ENCODE measurements at regions of chr3 and their contacts with region 1.

Region 1: DNA sequence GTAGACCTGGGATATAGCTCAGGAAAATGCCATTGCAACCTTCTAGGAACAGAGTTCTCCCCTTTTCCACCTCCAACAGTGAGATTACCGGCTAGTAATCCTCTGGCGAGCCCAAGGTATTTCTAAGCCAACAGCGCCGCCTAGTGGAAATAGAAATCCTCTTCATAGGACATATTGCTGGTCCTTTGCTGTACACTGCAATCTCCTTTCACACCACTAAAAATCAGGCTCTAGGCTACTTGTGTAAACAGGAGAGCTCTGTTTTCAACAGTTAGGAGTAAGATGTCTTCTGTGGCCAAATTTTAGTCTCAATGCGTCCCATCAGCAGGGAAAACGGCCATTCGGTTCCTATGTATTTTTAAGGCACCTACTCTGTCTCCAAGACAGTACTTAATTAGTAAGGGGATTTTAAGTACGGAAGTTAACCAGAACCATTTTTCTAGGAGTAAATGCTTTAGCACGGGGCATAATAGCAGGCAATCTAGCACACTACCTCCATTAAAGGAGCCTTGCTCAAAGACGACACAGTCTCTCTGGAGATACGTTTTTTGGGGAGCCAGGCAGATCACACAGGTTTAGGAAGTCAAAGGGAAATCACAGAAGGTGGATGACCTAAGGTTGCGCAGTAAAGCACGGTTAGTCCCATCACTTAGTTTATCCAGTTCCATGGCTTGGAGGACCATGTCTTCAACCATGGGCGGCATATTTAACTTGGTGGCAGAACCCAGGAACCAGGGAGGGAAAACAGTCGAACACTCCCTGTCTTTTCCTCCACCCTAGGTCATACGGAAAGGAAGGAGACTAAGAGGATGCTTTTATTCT is 43.8 kb downstream of the NCEH1 start:
- DNase-seq: peak; percentile 61 to 81
- ATAC-seq: peak; percentile 100
- H3K4me3 ChIP-seq: no peak overlapping the region
- H3K27ac ChIP-seq: peak overlapping the region; percentile 23 to 73; a peak in 4 of 6 replicates
- H3K4me1 ChIP-seq: peaks cover 5% of the 10 kb centered on the region; the same call in 2 of the 3 replicates
- CTCF ChIP-seq: peak; percentile 82
- EP300 ChIP-seq: no peak
- POLR2A ChIP-seq: no peak
- RAD21 ChIP-seq: peak; percentile 88 to 93

Region 2: GRCh38 chr3:170899455-170899854 is 1767.6 kb before region 1 on chr3:
- CTCF ChIA-PET with region 1: no interaction called
- POLR2A ChIA-PET with region 1: interaction called, 11 read pairs
- DNase-seq: no peak
- ATAC-seq: no peak
- H3K4me3 ChIP-seq: no peak overlapping the region
- H3K27ac ChIP-seq: no peak overlapping the region
- H3K4me1 ChIP-seq: no peaks in the 10 kb centered on the region
- CTCF ChIP-seq: no peak
- EP300 ChIP-seq: no peak
- POLR2A ChIP-seq: no peak
- RAD21 ChIP-seq: no peak

Region 3: GRCh38 chr3:172595641-172596393 is 71.3 kb before region 1 on chr3:
- CTCF ChIA-PET with region 1: interaction called, 27 read pairs
- POLR2A ChIA-PET with region 1: no interaction called
- DNase-seq: peak; percentile 45 to 46
- ATAC-seq: peak; percentile 80 to 91
- H3K4me3 ChIP-seq: peak overlapping the region; percentile 19; the same call in 1 of the 3 replicates
- H3K27ac ChIP-seq: peak overlapping the region; percentile 29 to 33; a peak in 2 of 6 replicates
- H3K4me1 ChIP-seq: peaks cover 7% of the 10 kb centered on the region; the same call in 1 of the 3 replicates
- CTCF ChIP-seq: peak; percentile 80
- EP300 ChIP-seq: no peak
- POLR2A ChIP-seq: no peak
- RAD21 ChIP-seq: peak; percentile 80 to 82

Region 4: GRCh38 chr3:172622916-172623700 is 44.0 kb before region 1 on chr3:
- CTCF ChIA-PET with region 1: interaction called, 30 read pairs
- POLR2A ChIA-PET with region 1: interaction called, 9 read pairs
- DNase-seq: peak in 1 of 2 experiments; percentile 44
- ATAC-seq: peak; percentile 56 to 76; a peak in 3 of 6 replicates
- H3K4me3 ChIP-seq: peak overlapping the region; percentile 63
- H3K27ac ChIP-seq: peak overlapping the region; percentile 89 to 97
- H3K4me1 ChIP-seq: peaks cover 40% of the 10 kb centered on the region
- CTCF ChIP-seq: peak; percentile 70
- EP300 ChIP-seq: no peak
- POLR2A ChIP-seq: no peak
- RAD21 ChIP-seq: peak in 1 of 2 experiments; percentile 34; a peak in 1 of 5 replicates

Region 5: GRCh38 chr3:172685346-172686214 is 18.5 kb after region 1 on chr3:
- CTCF ChIA-PET with region 1: interaction called, 23 read pairs
- POLR2A ChIA-PET with region 1: no interaction called
- DNase-seq: no peak
- ATAC-seq: 0 out of 6 replicates have a peak, but pooled peaks of 1 of the 2 experiments have one; percentile 21
- H3K4me3 ChIP-seq: no peak overlapping the region
- H3K27ac ChIP-seq: peak overlapping the region in 1 of 2 experiments; percentile 58; a peak in 3 of 6 replicates
- H3K4me1 ChIP-seq: peaks cover 22% of the 10 kb centered on the region
- CTCF ChIP-seq: no peak
- EP300 ChIP-seq: no peak
- POLR2A ChIP-seq: no peak
- RAD21 ChIP-seq: no peak

Region 6: DNA sequence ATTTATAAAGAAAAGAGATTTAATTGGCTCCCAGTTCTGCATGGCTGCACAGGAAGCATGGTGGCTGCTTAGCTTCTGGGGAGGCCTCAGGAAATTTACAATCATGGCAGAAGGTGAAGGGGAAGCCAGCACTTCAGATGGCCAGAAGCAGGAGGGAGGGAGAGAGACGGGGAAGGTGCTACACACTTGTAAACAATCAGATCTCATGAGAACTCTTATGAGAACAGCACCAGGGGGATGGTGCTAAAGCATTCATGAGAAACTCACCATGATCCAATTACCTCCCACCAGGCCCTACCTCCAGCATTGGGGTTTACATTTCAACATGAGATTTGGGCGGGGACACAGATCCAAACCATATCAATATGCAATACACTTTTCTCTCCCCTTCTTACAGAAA is 157.1 kb after region 1 on chr3:
- CTCF ChIA-PET with region 1: no interaction called
- POLR2A ChIA-PET with region 1: no interaction called
- DNase-seq: no peak
- ATAC-seq: no peak
- H3K4me3 ChIP-seq: no peak overlapping the region
- H3K27ac ChIP-seq: no peak overlapping the region
- H3K4me1 ChIP-seq: no peaks in the 10 kb centered on the region
- CTCF ChIP-seq: no peak
- EP300 ChIP-seq: no peak
- POLR2A ChIP-seq: no peak
- RAD21 ChIP-seq: no peak

Measured in A549 (cell line).